Activated CD4-positive, alpha-beta T cell treated with anti-CD3 and anti-CD28 coated beads, Interleukin-2, amount 10 ng/mL, durations not matched to agents 24 days and 14 days (primary cell): ENCODE measurements at regions of chr2 and their contacts with region 1.

Region 1: GRCh38 chr2:128736689-128737545 is 418.2 kb upstream of the HS6ST1 start:
- DNase-seq: peak; percentile 90
- H3K4me3 Mint-ChIP-seq: peak overlapping the region; percentile 72
- H3K27ac Mint-ChIP-seq: no peak overlapping the region
- H3K4me1 Mint-ChIP-seq: peaks cover 12% of the 10 kb centered on the region
- H3K27me3 Mint-ChIP-seq: peaks cover 17% of the 10 kb centered on the region

Region 2: GRCh38 chr2:128894896-128895295 is 158.0 kb after region 1 on chr2:
- intact Hi-C with region 1: no loop called
- DNase-seq: no peak
- H3K4me3 Mint-ChIP-seq: no peak overlapping the region
- H3K27ac Mint-ChIP-seq: no peak overlapping the region
- H3K4me1 Mint-ChIP-seq: no peaks in the 10 kb centered on the region
- H3K27me3 Mint-ChIP-seq: no peaks in the 10 kb centered on the region

Region 3: DNA sequence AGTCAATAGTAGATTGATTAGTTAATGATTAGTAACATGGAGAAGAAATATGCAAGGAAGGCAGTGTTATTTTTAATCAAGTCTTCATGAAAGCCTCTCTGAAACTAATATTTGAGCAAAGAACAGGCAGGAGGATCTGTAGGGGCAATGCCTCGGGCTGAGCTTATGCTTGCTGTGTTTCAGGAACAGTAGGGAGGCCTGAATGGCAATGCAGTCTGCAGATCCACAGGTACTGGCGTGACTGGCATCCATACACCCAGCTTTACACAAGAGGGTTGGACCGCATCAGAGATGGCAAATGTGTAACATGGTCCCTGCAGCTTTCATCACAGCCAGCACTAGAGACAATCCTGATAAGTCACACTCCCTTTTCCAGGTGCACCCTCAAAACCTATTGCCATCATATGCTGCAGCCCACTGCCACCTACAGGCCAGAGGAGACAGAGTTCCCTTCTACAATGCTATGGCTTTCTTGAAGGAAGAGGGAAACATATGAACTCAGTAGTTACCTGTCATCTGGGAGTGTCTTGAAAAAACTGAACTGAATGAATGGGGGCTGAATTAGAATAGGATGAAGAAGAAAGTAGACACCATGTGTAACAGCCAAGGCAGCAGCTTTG is 660.2 kb after region 1 on chr2:
- intact Hi-C with region 1: loop called (anchors 5 kb)
- DNase-seq: peak; percentile 58
- H3K4me3 Mint-ChIP-seq: no peak overlapping the region
- H3K27ac Mint-ChIP-seq: no peak overlapping the region
- H3K4me1 Mint-ChIP-seq: no peaks in the 10 kb centered on the region
- H3K27me3 Mint-ChIP-seq: no peaks in the 10 kb centered on the region